PC-9 (cell line): ENCODE measurements at regions of chr4 and their contacts with region 1.

Region 1: DNA sequence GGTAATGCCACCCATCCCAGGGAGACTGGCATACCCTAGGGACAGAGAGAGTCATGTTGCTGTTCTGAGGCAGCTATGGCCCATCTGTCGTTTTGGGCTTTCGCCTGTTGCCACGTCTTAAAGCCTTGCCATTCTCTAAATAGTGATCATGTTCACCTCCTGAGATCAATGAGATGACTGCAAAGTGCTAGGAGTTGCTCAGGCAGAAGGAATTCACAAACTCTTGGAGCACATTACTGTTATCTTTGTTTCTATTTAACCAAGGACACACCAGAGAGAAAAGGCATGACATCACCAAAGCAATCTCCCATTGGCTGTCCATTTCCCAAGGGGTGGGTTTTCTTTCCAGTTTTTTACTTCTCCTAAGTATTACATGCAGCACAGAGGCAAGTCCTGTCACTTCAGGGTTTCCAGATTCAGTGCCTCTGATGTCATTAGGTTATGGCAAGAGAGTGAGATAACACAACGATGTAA is 37.1 kb upstream of the SETD7 start:
- DNase-seq: no peak
- H3K4me3 ChIP-seq: no peak overlapping the region
- H3K27ac ChIP-seq: no peak overlapping the region
- H3K4me1 ChIP-seq: peaks cover 28% of the 10 kb centered on the region
- H3K27me3 ChIP-seq: no peaks in the 10 kb centered on the region
- CTCF ChIP-seq: no peak

Region 2: GRCh38 chr4:139554893-139555704 is 38.0 kb before region 1 on chr4:
- CTCF ChIA-PET with region 1: no interaction called
- POLR2A ChIA-PET with region 1: no interaction called
- intact Hi-C with region 1: loop called (anchors 2 kb)
- DNase-seq: peak; percentile 62 to 88
- H3K4me3 ChIP-seq: peak overlapping the region; percentile 87
- H3K27ac ChIP-seq: peak overlapping the region; percentile 67
- H3K4me1 ChIP-seq: peaks cover 27% of the 10 kb centered on the region
- H3K27me3 ChIP-seq: no peaks in the 10 kb centered on the region
- CTCF ChIP-seq: no peak

Region 3: DNA sequence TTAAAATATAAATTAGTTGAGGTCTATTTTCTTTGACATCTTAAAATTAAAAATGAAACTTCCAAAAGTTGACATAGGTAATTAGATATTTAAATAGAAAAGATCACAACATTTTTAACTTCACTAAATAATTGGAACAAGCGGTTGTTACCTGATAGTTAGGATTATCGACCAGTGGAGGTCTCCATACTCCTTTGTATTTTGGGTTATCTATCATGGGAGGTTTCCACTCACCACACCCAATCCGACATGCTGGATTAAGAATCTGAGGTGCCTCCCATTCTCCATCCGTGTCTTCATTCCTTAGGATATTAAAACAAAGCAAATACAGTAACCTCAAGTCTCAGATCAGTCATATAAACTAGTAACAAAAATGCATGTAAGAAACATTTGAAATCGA is 802.5 kb after region 1 on chr4:
- CTCF ChIA-PET with region 1: no interaction called
- POLR2A ChIA-PET with region 1: no interaction called
- intact Hi-C with region 1: no loop called
- DNase-seq: no peak
- H3K4me3 ChIP-seq: no peak overlapping the region
- H3K27ac ChIP-seq: no peak overlapping the region
- H3K4me1 ChIP-seq: no peaks in the 10 kb centered on the region
- H3K27me3 ChIP-seq: no peaks in the 10 kb centered on the region
- CTCF ChIP-seq: no peak